Activated CD4-positive, alpha-beta memory T cell treated with anti-CD3 and anti-CD28 coated beads for 36 hours (primary cell): ENCODE measurements at regions of chr17 and their contacts with region 1.

Region 1: DNA sequence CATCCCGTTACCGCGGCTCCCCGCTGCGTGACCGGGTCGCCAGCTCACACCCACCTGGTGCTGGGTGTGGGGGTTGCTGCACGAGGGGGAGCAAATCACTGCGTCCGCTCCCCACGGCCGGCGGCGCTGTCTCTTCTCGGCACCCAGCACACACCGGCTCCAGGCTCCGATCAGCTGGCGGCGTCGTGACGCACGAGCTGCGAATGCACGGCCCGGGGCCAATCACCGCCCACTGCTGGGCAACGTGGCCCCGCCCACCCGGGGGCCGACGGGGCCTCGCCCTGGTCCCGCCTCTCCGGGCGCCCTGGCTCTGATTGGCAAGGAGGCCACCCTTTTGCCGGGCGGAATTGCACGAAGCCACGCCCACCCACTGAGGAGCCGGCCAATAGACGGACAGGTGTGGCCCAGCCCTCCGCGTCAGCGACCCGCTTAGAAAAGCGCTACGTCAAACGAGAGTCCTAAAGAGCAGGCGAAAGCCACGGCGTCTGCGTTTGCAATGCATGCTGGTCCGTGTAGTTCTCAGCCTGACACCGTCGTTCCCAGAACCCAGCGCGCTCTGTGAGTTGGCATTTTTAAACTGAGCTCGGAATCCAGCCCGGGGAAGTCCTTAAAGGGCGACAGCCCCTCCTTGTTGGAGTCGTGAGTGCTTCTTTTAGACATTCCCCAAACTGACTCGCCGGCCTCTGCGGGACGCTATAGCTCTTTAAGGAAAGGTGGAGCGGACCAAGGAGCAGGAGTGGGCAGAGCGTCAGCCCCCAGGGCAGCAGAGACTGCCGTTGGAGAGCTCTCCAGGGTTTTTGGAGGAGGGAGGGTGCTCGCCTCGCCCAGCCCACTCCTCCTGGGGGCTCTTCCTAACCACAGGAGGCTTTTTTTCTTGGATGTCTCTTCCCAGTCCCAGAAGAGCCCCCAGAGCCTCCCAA is 6.2 kb upstream of the TLCD2 start:
- DNase-seq: peak; percentile 100
- H3K4me3 Mint-ChIP-seq: peak overlapping the region; percentile 94
- H3K27ac Mint-ChIP-seq: peak overlapping the region; percentile 99
- H3K4me1 Mint-ChIP-seq: peaks cover 18% of the 10 kb centered on the region
- H3K27me3 Mint-ChIP-seq: no peaks in the 10 kb centered on the region

Region 2: DNA sequence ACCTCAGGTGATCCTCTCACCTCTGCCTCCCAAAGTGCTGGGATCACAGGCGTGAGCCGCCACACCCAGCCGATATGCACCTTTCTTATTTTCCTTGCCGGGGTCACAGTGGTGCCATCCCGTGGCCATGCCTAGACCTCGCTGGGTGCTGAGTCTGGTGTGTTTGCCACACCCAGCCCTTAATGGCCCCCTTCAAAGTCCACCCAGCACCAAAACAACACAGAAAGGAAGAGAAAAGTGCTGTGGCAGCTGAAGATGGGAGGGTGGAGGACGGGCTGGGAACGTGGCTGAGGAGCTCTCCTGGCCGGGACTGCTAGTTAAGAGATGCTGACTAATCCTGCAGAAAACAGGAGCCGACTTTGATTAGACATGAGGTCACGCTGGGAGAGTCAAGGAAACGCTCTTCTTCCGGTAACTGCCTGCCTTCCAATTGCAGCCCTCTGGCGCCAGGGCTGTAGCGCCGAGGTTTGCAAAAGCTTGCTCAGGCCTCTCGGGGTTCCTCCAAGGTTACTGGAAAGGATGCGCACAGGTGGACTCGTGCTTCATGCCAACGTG is 98.6 kb before region 1 on chr17:
- CTCF ChIA-PET with region 1: no interaction called
- POLR2A ChIA-PET with region 1: no interaction called
- intact Hi-C with region 1: no loop called
- DNase-seq: no peak
- H3K4me3 Mint-ChIP-seq: no peak overlapping the region
- H3K27ac Mint-ChIP-seq: no peak overlapping the region
- H3K4me1 Mint-ChIP-seq: no peaks in the 10 kb centered on the region
- H3K27me3 Mint-ChIP-seq: no peaks in the 10 kb centered on the region

Region 3: DNA sequence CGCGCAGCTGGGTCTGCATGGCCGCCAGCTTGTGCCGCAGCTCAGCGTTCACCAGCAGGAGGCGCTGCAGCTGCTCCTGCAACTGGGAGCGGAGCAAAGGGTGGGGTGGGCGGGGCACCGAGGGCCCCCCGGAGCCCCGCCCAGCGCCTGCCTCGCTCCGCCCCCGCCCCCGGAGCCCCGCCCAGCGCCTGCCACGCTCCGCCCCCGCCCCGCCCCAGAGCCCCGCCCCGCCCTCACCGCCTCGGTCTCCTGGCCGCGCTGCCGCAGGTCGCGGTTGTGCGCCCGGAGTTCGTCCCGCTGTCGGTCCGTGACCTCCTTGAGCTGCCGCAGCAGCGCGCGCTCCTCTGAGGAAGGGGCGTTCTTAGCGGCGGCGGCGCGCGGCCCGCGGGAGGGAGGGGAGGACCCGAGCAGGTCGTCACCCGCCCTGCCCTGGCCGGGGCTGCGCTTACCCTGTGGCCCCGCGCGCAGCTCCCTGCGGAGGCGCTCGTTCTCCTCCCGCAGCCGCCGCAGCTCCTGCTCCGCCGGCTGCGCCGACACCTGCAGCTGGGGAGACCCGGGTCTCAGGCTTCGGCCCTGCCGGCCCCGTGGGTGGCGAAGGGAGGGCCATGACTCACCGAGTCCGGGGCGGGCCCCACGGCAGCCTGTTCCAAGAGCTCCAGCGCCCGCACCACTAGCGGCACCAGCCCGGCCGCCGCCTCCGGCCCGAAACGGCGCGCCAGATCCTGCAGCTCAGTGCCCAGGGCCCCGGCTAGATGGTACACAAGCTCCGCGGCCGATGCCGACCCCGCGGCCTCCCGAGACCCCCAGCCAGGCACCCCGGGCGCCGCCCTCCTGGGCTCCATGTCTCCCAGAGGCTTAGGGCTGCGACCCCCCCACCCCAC is 67.1 kb before region 1 on chr17:
- CTCF ChIA-PET with region 1: interaction called, 22 read pairs
- POLR2A ChIA-PET with region 1: interaction called, 9 read pairs
- intact Hi-C with region 1: loop called (anchors 2 kb)
- DNase-seq: peak; percentile 95
- H3K4me3 Mint-ChIP-seq: peak overlapping the region; percentile 54
- H3K27ac Mint-ChIP-seq: no peak overlapping the region
- H3K4me1 Mint-ChIP-seq: peaks cover 26% of the 10 kb centered on the region
- H3K27me3 Mint-ChIP-seq: no peaks in the 10 kb centered on the region

Region 4: DNA sequence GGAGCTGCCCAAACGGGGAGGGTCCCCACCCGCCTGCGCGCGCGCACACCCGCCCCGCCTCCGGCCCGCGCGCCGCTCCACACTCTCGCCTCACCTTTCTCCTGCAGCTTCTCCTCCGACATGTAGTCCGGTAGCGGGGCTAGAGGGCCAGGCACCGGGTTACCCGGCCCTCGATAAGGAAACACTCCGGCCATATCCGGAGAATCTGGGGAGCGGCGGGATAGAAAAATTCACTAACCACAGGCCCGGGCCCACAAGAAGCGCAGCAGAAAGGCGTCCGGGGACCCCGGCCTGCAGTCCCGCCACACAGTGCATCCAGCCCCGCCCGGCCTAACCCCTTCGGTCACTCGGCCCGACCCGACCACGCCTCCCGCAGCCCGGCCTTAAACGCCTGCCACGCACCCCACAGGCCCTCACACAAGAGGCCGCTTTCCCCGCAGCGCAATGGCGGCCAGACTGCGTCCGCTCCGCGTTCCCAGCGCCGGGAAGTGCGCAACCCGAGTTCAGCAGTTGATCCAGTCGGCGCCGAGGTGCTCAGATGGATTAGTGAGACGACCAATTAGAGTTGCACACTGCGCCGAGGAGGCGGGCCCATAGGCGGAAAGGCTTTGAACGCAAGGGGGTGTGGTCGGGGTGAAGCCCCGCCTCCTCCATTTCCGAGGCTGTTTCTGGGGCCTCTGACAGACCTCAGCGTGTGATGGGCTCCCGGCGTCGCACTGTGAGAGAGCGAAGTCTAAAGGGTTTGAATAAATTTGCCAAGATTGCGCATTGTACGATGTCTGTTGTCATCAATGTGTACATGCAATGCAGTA is 31.8 kb before region 1 on chr17 and contains the start of gene PRPF8:
- CTCF ChIA-PET with region 1: interaction called, 6 read pairs
- POLR2A ChIA-PET with region 1: interaction called, 8 read pairs
- intact Hi-C with region 1: loop called (anchors 1 kb)
- DNase-seq: peak; percentile 99
- H3K4me3 Mint-ChIP-seq: peak within 1 kb of the TSS; percentile 99
- H3K27ac Mint-ChIP-seq: peak within 1 kb of the TSS; percentile 95
- H3K4me1 Mint-ChIP-seq: peaks cover 30% of the 10 kb centered on the region
- H3K27me3 Mint-ChIP-seq: no peaks in the 10 kb centered on the region
- total RNA-seq, gene PRPF8: 370 to 378 TPM

Region 5: DNA sequence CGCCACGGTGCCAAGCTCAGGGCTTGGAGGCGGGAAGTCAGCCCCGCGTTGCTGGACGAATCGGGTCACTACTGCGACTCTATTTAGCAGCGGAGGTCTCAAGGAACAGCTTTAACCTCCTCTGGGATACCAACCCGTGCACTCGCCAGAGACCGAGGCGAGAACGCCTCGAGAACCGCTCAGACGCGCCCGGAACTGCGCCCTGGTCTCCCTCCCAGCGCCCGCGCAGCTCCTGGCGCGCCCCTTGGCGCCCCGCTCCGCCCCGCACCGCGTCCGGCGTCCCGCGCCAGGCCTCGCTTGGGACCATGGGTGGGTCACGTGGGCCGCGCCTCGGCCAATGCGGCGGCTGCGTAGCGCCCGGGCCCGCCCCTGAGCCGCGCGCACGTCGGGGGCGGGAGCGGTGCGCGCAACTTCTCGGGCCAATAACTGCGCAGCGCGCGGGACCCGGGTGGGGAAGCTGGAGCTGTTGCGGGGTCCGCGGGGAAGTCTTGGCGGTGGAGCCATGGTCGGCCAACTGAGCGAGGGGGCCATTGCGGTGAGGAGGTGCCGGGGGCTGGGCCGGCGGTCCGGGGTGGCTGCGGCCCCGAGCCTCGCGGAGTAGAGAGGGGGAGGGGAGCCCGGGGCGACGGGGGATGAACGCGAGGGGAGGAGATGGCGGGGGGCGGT is 113.4 kb after region 1 on chr17 and contains the starts of genes RPA1 and SMYD4:
- CTCF ChIA-PET with region 1: interaction called, 10 read pairs
- POLR2A ChIA-PET with region 1: interaction called, 13 read pairs
- intact Hi-C with region 1: loop called (anchors 1 kb)
- DNase-seq: peak; percentile 93
- H3K4me3 Mint-ChIP-seq: peak within 1 kb of the TSS; percentile 89
- H3K27ac Mint-ChIP-seq: peak within 1 kb of the TSS; percentile 83
- H3K4me1 Mint-ChIP-seq: peaks cover 56% of the 10 kb centered on the region
- H3K27me3 Mint-ChIP-seq: no peaks in the 10 kb centered on the region
- total RNA-seq, gene RPA1: 159 to 168 TPM
- total RNA-seq, gene SMYD4: 14.5 to 15.8 TPM

Region 6: DNA sequence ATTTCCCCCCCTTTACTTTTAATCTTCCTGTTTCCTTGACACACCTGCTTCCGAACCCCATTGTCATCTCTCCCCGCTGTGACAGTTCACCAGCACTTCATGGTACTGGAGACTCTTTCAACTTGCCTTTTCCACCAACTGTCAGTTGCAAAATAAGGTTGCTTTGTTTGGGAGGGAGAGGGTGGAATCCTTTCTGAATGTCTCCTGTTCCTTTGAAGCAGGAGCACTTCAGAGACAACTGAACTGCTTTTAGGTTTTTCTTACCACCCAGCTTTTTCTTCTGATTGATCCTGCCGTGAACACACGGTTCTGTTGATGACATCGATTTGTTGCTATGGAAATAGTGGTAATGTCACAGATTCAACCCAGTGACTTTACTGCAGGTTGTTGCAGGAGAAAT is 155.4 kb after region 1 on chr17:
- CTCF ChIA-PET with region 1: interaction called, 6 read pairs
- POLR2A ChIA-PET with region 1: interaction called, 3 read pairs
- intact Hi-C with region 1: loop called (anchors 2 kb)
- DNase-seq: peak; percentile 20
- H3K4me3 Mint-ChIP-seq: no peak overlapping the region
- H3K27ac Mint-ChIP-seq: peak overlapping the region; percentile 51
- H3K4me1 Mint-ChIP-seq: peaks cover 50% of the 10 kb centered on the region
- H3K27me3 Mint-ChIP-seq: no peaks in the 10 kb centered on the region

Region 7: GRCh38 chr17:2029911-2030778 is 313.8 kb after region 1 on chr17 and contains the start of gene DPH1:
- CTCF ChIA-PET with region 1: interaction called, 12 read pairs
- POLR2A ChIA-PET with region 1: interaction called, 3 read pairs
- intact Hi-C with region 1: no loop called
- DNase-seq: peak; percentile 92
- H3K4me3 Mint-ChIP-seq: peak within 1 kb of the TSS; percentile 95
- H3K27ac Mint-ChIP-seq: peak within 1 kb of the TSS; percentile 67
- H3K4me1 Mint-ChIP-seq: peaks cover 15% of the 10 kb centered on the region
- H3K27me3 Mint-ChIP-seq: peaks cover 22% of the 10 kb centered on the region
- total RNA-seq, gene DPH1: 29.4 to 31.1 TPM

Region 8: GRCh38 chr17:2259769-2260536 is 543.6 kb after region 1 on chr17:
- CTCF ChIA-PET with region 1: interaction called, 4 read pairs
- POLR2A ChIA-PET with region 1: no interaction called
- intact Hi-C with region 1: loop called (anchors 10 kb)
- DNase-seq: peak; percentile 90
- H3K4me3 Mint-ChIP-seq: peak overlapping the region; percentile 65
- H3K27ac Mint-ChIP-seq: peak overlapping the region; percentile 93
- H3K4me1 Mint-ChIP-seq: peaks cover 72% of the 10 kb centered on the region
- H3K27me3 Mint-ChIP-seq: no peaks in the 10 kb centered on the region